Mammary epithelial cell (primary cell): ENCODE measurements at regions of chr14 and their contacts with region 1.

Region 1: GRCh38 chr14:49633640-49634546 is 1.2 kb downstream of the DNAAF2 start:
- DNase-seq: peak; percentile 92
- H3K4me3 ChIP-seq: peak overlapping the region; percentile 91 to 94 (median 92)
- H3K27ac ChIP-seq: peak overlapping the region; percentile 94
- H3K4me1 ChIP-seq: no peaks in the 10 kb centered on the region
- H3K27me3 ChIP-seq: no peaks in the 10 kb centered on the region
- CTCF ChIP-seq: peak; percentile 57 to 83

Region 2: GRCh38 chr14:49598485-49599300 is 35.2 kb before region 1 on chr14 and contains the start of gene LRR1:
- CTCF ChIA-PET with region 1: no interaction called
- dilution Hi-C with region 1: no loop called
- in situ Hi-C with region 1: no loop called
- intact Hi-C with region 1: loop called (anchors 1 kb)
- DNase-seq: peak; percentile 86
- H3K4me3 ChIP-seq: peak within 1 kb of the TSS; percentile 65 to 87 (median 79)
- H3K27ac ChIP-seq: peak within 1 kb of the TSS; percentile 88
- H3K4me1 ChIP-seq: peaks cover 3% of the 10 kb centered on the region
- H3K27me3 ChIP-seq: no peaks in the 10 kb centered on the region
- CTCF ChIP-seq: no peak
- total RNA-seq, gene LRR1: 8.3 to 20.7 TPM

Region 3: GRCh38 chr14:49620182-49621113 is 13.4 kb before region 1 on chr14 and contains the starts of genes MGAT2 and RPL36AL:
- CTCF ChIA-PET with region 1: no interaction called
- dilution Hi-C with region 1: no loop called
- in situ Hi-C with region 1: no loop called
- intact Hi-C with region 1: loop called (anchors 1 kb)
- DNase-seq: peak; percentile 98
- H3K4me3 ChIP-seq: peak within 1 kb of the TSS; percentile 97 to 100 (median 98)
- H3K27ac ChIP-seq: peak within 1 kb of the TSS; percentile 96
- H3K4me1 ChIP-seq: peaks cover 40% of the 10 kb centered on the region
- H3K27me3 ChIP-seq: no peaks in the 10 kb centered on the region
- CTCF ChIP-seq: peak in 1 of 2 donors; percentile 39
- total RNA-seq, gene MGAT2: 40.5 to 41.8 TPM
- total RNA-seq, gene RPL36AL: 78.7 to 214 TPM

Region 4: GRCh38 chr14:49677643-49678042 is 43.8 kb after region 1 on chr14:
- CTCF ChIA-PET with region 1: no interaction called
- dilution Hi-C with region 1: no loop called
- in situ Hi-C with region 1: no loop called
- intact Hi-C with region 1: no loop called
- DNase-seq: no peak
- H3K4me3 ChIP-seq: no peak overlapping the region
- H3K27ac ChIP-seq: no peak overlapping the region
- H3K4me1 ChIP-seq: peaks cover 13% of the 10 kb centered on the region
- H3K27me3 ChIP-seq: no peaks in the 10 kb centered on the region
- CTCF ChIP-seq: no peak

Region 5: GRCh38 chr14:49767562-49768300 is 133.8 kb after region 1 on chr14 and contains the start of gene KLHDC2:
- CTCF ChIA-PET with region 1: interaction called, 12 read pairs
- dilution Hi-C with region 1: no loop called
- in situ Hi-C with region 1: loop called in 1 of 2 experiments (anchors 5 kb)
- intact Hi-C with region 1: loop called (anchors 1 kb)
- DNase-seq: peak; percentile 84
- H3K4me3 ChIP-seq: peak within 1 kb of the TSS; percentile 75 to 94 (median 88)
- H3K27ac ChIP-seq: peak within 1 kb of the TSS; percentile 85
- H3K4me1 ChIP-seq: peaks cover 18% of the 10 kb centered on the region
- H3K27me3 ChIP-seq: no peaks in the 10 kb centered on the region
- CTCF ChIP-seq: peak in 1 of 2 donors; percentile 2
- total RNA-seq, gene KLHDC2: 29.0 to 41.5 TPM

Region 6: GRCh38 chr14:49828640-49829039 is 194.7 kb after region 1 on chr14:
- CTCF ChIA-PET with region 1: no interaction called
- dilution Hi-C with region 1: no loop called
- in situ Hi-C with region 1: no loop called
- intact Hi-C with region 1: loop called (anchors 1 kb)
- DNase-seq: no peak
- H3K4me3 ChIP-seq: no peak overlapping the region
- H3K27ac ChIP-seq: no peak overlapping the region
- H3K4me1 ChIP-seq: no peaks in the 10 kb centered on the region
- H3K27me3 ChIP-seq: no peaks in the 10 kb centered on the region
- CTCF ChIP-seq: no peak

Region 7: GRCh38 chr14:50116181-50116956 is 482.5 kb after region 1 on chr14 and contains the start of gene VCPKMT:
- CTCF ChIA-PET with region 1: no interaction called
- dilution Hi-C with region 1: no loop called
- in situ Hi-C with region 1: loop called in 1 of 2 experiments (anchors 25 kb)
- intact Hi-C with region 1: no loop called
- DNase-seq: peak; percentile 88
- H3K4me3 ChIP-seq: peak within 1 kb of the TSS; percentile 86 to 97 (median 87)
- H3K27ac ChIP-seq: peak within 1 kb of the TSS; percentile 91
- H3K4me1 ChIP-seq: peaks cover 10% of the 10 kb centered on the region
- H3K27me3 ChIP-seq: no peaks in the 10 kb centered on the region
- CTCF ChIP-seq: no peak
- total RNA-seq, gene VCPKMT: 7.5 to 8.1 TPM